Psoas muscle (tissue), 8 donors: ENCODE measurements at regions of chr16 and their contacts with region 1.

Region 1: DNA sequence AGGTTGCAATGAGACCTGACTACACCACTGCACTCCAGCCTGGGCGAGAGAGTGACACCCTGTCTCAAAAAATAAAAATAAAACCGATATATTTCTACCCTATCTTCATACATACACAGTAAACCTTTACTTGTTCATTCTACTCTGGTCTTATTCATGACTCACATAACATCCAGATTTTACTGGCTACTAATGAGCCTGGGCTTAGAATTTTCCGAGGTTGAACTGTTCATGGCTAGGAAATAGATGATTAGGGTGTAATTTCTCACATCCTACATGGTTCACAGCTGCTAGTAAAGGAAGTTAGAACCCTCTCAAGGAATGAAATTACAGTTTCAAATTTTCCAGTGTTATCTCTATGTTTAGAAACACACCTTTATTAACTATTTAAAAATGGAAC is 14.7 kb downstream of the GSPT1 start:
- DNase-seq: no peak
- ATAC-seq: peak in 1 of 4 donors; percentile 31
- H3K4me3 ChIP-seq: no peak overlapping the region
- H3K27ac ChIP-seq: no peak overlapping the region
- H3K4me1 ChIP-seq: peaks cover 5% of the 10 kb centered on the region
- H3K27me3 ChIP-seq: no peaks in the 10 kb centered on the region
- CTCF ChIP-seq: no peak

Region 2: GRCh38 chr16:10995565-10995964 is 905.5 kb before region 1 on chr16:
- intact Hi-C with region 1: no loop called
- DNase-seq: no peak
- ATAC-seq: no peak
- H3K4me3 ChIP-seq: no peak overlapping the region
- H3K27ac ChIP-seq: no peak overlapping the region
- H3K4me1 ChIP-seq: no peaks in the 10 kb centered on the region
- H3K27me3 ChIP-seq: no peaks in the 10 kb centered on the region
- CTCF ChIP-seq: no peak

Region 3: DNA sequence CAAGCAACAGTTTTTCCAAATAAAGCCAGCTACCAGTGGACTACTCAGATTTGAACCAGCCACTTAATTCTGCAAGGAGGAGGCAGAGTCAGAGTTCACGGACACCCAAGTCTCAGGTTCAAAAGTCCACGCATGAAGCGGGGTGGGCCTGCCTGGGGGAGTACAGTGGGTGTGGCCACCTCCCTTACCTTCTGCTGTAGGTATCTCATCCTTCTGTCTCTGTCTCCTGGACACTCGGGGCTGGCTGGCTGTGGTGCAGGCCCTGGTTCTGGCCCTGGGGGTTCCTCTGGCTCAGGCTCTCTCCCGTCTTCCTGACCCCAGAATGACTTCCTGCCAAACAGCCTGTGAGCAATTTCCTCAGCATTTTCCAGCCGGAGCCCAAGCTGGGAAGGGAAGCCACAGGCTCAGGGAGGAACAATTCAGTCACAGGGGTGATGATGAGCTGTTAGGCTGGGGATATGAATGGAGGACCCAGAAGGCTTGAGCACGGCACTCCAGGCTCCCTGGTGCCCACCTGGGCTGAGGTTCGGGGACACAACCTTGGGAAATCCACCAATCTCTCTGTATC is 416.3 kb before region 1 on chr16:
- intact Hi-C with region 1: no loop called
- DNase-seq: peak in 1 of 2 donors; percentile 23
- ATAC-seq: peak in 1 of 4 donors; percentile 19
- H3K4me3 ChIP-seq: no peak overlapping the region
- H3K27ac ChIP-seq: no peak overlapping the region
- H3K4me1 ChIP-seq: no peaks in the 10 kb centered on the region
- H3K27me3 ChIP-seq: no peaks in the 10 kb centered on the region
- CTCF ChIP-seq: no peak

Region 4: GRCh38 chr16:11869657-11870228 is 31.3 kb before region 1 on chr16:
- intact Hi-C with region 1: loop called in 1 of 2 experiments (anchors 5 kb)
- DNase-seq: no peak
- ATAC-seq: no peak
- H3K4me3 ChIP-seq: no peak overlapping the region
- H3K27ac ChIP-seq: no peak overlapping the region
- H3K4me1 ChIP-seq: peaks cover 25% of the 10 kb centered on the region
- H3K27me3 ChIP-seq: no peaks in the 10 kb centered on the region
- CTCF ChIP-seq: no peak